Gastrocnemius medialis (tissue), 4 donors: ENCODE measurements at regions of chr9 and their contacts with region 1.

Region 1: GRCh38 chr9:8254541-8254940 is 455.0 kb upstream of the DMAC1 start:
- DNase-seq: no peak
- ATAC-seq: no peak
- H3K4me3 ChIP-seq: no peak overlapping the region
- H3K27ac ChIP-seq: no peak overlapping the region
- H3K4me1 ChIP-seq: no peaks in the 10 kb centered on the region
- H3K27me3 ChIP-seq: no peaks in the 10 kb centered on the region
- CTCF ChIP-seq: no peak
- POLR2A ChIP-seq: no peak

Region 2: DNA sequence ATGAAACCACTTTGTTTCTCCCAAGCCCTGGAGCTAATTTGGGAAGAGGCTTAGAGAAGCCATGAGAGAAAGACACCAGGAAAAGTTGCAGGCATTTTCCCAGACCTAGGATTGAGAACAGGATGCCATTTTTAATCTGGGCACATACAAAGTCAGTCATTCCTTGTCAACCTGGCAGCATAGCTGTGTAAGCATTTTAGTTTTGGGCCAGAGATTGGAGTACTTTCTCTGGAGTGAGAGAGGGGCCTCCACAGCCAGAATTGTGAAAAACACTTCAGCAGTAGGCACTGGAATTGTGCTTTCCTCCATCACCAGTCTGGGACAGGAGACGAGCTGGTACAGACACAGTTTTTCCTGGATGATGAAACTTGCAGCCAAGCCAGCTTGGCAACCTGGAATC is 64.7 kb before region 1 on chr9:
- in situ Hi-C with region 1: loop called in 1 of 4 experiments (anchors 10 kb)
- intact Hi-C with region 1: no loop called
- DNase-seq: no peak
- ATAC-seq: no peak
- H3K4me3 ChIP-seq: no peak overlapping the region
- H3K27ac ChIP-seq: no peak overlapping the region
- H3K4me1 ChIP-seq: no peaks in the 10 kb centered on the region
- H3K27me3 ChIP-seq: no peaks in the 10 kb centered on the region
- CTCF ChIP-seq: no peak
- POLR2A ChIP-seq: no peak

Region 3: DNA sequence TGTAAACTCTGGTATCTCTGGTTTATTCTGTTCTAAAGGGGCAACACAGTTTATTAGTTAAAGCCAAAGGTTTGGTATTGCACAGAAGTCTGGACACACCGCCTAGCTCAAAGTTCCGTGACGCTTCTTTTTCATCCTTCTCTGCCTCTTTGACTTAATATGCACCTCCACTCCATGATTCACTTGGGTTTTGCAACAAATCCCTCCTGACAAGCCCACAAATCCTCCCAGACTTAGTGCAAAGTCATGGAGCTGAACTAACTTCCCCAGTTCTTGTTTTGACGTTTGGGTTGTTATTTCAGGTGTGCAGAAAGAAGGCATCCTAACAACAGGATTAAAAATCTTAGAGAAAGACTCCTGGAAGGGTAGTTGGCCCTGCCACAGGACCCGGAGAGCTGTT is 13.3 kb before region 1 on chr9:
- in situ Hi-C with region 1: no loop called
- intact Hi-C with region 1: no loop called
- DNase-seq: no peak
- ATAC-seq: no peak
- H3K4me3 ChIP-seq: no peak overlapping the region
- H3K27ac ChIP-seq: no peak overlapping the region
- H3K4me1 ChIP-seq: no peaks in the 10 kb centered on the region
- H3K27me3 ChIP-seq: no peaks in the 10 kb centered on the region
- CTCF ChIP-seq: no peak
- POLR2A ChIP-seq: no peak